ENCODE measurements at regions of chr7 and their contacts with region 1.

Region 1: DNA sequence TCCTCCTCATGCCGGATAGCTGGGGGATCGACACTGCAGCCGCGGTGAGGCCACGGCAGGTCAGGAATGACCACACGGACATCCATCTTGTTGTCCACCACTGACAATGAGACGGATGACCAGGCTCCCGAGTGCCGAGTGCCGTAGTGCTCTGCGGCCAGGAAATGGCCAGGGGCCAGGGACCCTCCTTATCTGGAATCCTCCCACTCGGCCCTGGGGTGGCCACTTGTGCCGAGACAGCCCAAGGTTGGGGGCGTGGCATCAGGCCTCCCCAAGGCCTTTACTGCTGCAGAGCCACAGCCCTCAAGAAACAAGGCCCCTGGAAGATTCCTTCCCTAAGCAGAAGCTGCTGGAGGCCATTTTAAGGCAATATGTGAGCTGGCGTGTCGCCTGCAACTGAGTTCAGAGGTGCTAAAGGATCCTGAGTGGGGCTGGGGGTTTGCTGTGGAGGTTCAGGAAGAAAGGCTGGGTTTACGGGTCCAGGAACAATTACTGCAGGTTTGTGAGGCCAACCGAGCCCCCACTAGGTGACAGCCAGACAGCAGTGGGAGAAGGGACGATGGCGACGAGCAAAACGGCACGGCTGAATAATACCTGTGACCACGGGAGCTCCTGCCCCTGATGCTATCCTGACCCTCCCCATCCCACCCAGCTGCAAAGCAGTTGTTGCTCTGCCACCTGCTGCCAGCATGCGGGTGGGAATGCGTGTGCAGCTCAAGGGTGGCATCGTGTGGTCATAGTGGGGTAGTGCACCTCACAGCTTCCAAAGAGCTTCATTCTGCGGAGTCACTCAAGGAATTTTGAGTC is 31.6 kb upstream of the LEP start:
- DNase-seq: peak; percentile 72 to 86
- ATAC-seq: peak; percentile 92
- H3K4me3 ChIP-seq: no peak overlapping the region
- H3K27ac ChIP-seq: no peak overlapping the region
- H3K4me1 ChIP-seq: no peaks in the 10 kb centered on the region
- H3K27me3 ChIP-seq: no peaks in the 10 kb centered on the region

Region 2: DNA sequence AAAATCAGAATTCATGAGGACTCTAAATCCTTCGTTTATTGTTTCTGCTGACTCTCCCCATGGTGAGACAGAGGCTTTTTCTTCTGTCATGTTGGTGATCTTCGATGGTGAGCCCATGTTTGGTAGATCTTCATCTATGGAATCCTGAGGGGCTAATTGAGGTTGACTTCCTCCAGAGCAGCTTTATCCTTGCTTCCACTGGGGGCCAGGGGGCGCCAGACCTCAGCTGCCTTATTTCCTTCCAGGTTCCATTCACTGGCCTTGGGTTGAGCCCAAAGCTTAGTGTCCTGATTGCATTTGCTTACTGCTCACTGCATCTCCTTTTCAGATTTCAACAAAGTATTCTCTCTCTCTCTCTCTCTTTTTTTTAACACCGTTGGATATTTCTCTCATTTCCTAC is 704.7 kb before region 1 on chr7:
- intact Hi-C with region 1: loop called in 1 of 2 experiments (anchors 10 kb)
- DNase-seq: no peak
- ATAC-seq: peak; percentile 44
- H3K4me3 ChIP-seq: no peak overlapping the region
- H3K27ac ChIP-seq: no peak overlapping the region
- H3K4me1 ChIP-seq: no peaks in the 10 kb centered on the region
- H3K27me3 ChIP-seq: no peaks in the 10 kb centered on the region

Region 3: GRCh38 chr7:127708788-127709187 is 500.6 kb before region 1 on chr7:
- intact Hi-C with region 1: loop called (anchors 2 kb)
- DNase-seq: peak in 1 of 2 donors; percentile 66
- ATAC-seq: peak; percentile 90
- H3K4me3 ChIP-seq: no peak overlapping the region
- H3K27ac ChIP-seq: no peak overlapping the region
- H3K4me1 ChIP-seq: peaks cover 0 to 2% of the 10 kb centered on the region in 2 donors
- H3K27me3 ChIP-seq: no peaks in the 10 kb centered on the region

Region 4: DNA sequence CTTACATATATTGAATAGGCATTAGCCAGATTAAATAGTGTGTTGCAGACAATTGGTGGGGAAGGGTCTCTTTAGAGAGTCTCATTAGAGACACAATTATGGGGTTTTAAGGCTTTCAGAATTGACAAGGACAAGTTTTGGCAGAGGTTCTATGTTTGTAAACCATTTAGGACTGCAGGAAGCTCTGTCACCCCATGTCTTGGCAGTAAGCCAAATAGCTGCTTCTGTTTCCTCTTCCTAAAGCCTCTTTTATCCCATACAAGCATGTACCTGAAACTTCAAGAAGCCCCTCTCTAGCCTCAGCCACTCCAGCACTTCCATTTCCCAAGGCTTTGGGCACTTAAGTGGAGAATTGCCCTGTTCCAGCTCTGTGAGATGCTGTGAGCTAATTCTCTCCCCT is 156.4 kb before region 1 on chr7:
- intact Hi-C with region 1: no loop called
- DNase-seq: no peak
- ATAC-seq: no peak
- H3K4me3 ChIP-seq: no peak overlapping the region
- H3K27ac ChIP-seq: no peak overlapping the region
- H3K4me1 ChIP-seq: no peaks in the 10 kb centered on the region
- H3K27me3 ChIP-seq: no peaks in the 10 kb centered on the region

Region 5: GRCh38 chr7:128135515-128136214 is 73.8 kb before region 1 on chr7:
- intact Hi-C with region 1: loop called (anchors 1 to 5 kb)
- DNase-seq: peak; percentile 63 to 84
- ATAC-seq: peak; percentile 95
- H3K4me3 ChIP-seq: peak overlapping the region; percentile 29 to 38
- H3K27ac ChIP-seq: no peak overlapping the region
- H3K4me1 ChIP-seq: no peaks in the 10 kb centered on the region
- H3K27me3 ChIP-seq: peaks cover 0 to 2% of the 10 kb centered on the region in 2 donors

Region 6: GRCh38 chr7:128167042-128167691 is 42.3 kb before region 1 on chr7:
- intact Hi-C with region 1: no loop called
- DNase-seq: no peak
- ATAC-seq: peak; percentile 5
- H3K4me3 ChIP-seq: peak overlapping the region; percentile 4 to 5
- H3K27ac ChIP-seq: no peak overlapping the region
- H3K4me1 ChIP-seq: no peaks in the 10 kb centered on the region
- H3K27me3 ChIP-seq: peaks cover 0 to 4% of the 10 kb centered on the region in 2 donors

Measured in aorta (tissue), 5 donors.